Esophagus muscularis mucosa (tissue), 4 donors: ENCODE measurements at regions of chr4 and their contacts with region 1.

Region 1: DNA sequence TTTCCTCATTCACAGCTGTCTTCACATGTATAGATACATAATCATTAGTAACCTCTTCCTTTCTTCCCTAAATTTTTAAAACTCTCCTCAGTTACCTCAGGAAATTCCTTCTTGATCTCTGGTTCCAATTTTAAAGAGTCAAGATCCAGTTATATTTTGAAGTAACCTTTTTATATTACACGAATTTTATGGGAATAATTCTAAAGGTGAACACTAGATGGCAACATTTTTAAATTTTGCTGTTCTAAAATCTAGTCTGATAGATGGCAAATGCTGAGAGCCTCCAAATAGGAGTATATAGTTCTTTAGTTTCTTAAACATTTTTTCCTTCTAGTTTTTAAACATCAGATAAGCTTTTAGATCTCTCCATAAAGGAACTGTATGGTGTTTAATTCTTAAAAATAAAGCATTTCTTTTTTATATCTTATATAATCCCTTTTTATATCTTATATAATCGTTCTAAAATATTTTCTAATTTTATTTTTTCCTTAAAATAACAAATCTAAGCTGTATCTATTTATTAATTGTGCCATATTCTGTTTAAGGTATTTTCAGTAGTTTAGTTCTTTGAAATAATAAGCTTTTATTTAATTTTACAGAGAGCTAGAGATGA is 37.9 kb upstream of the PAPSS1 start:
- DNase-seq: no peak
- H3K4me3 ChIP-seq: no peak overlapping the region
- H3K27ac ChIP-seq: no peak overlapping the region
- H3K4me1 ChIP-seq: peaks cover 0 to 3% (median 0%) of the 10 kb centered on the region in 4 donors
- H3K27me3 ChIP-seq: no peaks in the 10 kb centered on the region
- CTCF ChIP-seq: peak; percentile 64 to 74 (median 68)
- EP300 ChIP-seq: no peak
- POLR2A ChIP-seq: no peak

Region 2: DNA sequence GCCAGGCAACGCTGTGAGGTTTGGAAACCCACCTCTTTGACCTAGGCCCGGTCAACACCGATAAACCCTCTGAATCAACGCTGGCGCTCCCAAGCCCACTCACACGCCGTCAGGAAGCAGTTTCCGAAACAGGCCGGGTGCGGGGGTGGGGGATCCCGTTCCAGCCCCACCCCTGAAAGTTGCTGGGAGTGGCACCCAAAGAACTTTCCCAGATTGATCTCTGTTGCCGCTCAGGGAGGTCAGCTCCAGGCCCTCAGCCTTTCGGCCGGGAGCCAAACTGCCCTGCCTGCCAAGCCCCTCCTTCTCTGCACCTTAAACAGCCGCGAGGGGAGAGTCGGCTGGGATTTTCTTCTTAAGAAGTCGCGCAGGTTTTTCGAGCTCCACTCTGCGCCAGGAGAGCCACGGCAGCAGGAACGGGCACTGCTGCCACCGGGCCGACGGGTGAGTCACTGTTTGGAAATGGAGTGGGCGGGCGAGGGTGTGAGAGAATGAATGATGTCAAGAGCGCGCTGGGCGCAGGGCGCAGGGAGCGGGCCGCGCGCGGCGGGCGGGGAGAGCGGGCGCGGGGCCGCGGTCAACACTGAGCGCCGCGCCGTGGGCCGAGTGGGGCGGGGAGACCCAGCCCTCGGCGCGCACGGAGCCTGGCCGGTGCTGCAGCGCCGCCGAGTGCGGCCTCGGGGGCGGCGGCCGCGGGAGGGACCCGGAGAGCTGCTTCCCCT is 66.5 kb after region 1 on chr4 and contains the start of gene SGMS2:
- intact Hi-C with region 1: loop called (anchors 5 kb)
- DNase-seq: peak; percentile 97
- H3K4me3 ChIP-seq: peak within 1 kb of the TSS; percentile 86 to 97 (median 96)
- H3K27ac ChIP-seq: peak within 1 kb of the TSS; percentile 96 to 99 (median 96)
- H3K4me1 ChIP-seq: peaks cover 5 to 49% (median 42%) of the 10 kb centered on the region in 4 donors
- H3K27me3 ChIP-seq: no peaks in the 10 kb centered on the region
- CTCF ChIP-seq: no peak
- EP300 ChIP-seq: no peak
- POLR2A ChIP-seq: no peak
- total RNA-seq, gene SGMS2: 278 to 487 (median 347) TPM

Region 3: GRCh38 chr4:107913281-107913899 is 155.4 kb after region 1 on chr4:
- intact Hi-C with region 1: loop called (anchors 2 kb)
- DNase-seq: no peak
- H3K4me3 ChIP-seq: no peak overlapping the region
- H3K27ac ChIP-seq: no peak overlapping the region
- H3K4me1 ChIP-seq: peaks cover 0 to 14% (median 4%) of the 10 kb centered on the region in 4 donors
- H3K27me3 ChIP-seq: no peaks in the 10 kb centered on the region
- CTCF ChIP-seq: peak; percentile 80 to 86 (median 81)
- EP300 ChIP-seq: no peak
- POLR2A ChIP-seq: no peak